Heart left ventricle (tissue), 16 donors: ENCODE measurements at regions of chr16 and their contacts with region 1.

Region 1: DNA sequence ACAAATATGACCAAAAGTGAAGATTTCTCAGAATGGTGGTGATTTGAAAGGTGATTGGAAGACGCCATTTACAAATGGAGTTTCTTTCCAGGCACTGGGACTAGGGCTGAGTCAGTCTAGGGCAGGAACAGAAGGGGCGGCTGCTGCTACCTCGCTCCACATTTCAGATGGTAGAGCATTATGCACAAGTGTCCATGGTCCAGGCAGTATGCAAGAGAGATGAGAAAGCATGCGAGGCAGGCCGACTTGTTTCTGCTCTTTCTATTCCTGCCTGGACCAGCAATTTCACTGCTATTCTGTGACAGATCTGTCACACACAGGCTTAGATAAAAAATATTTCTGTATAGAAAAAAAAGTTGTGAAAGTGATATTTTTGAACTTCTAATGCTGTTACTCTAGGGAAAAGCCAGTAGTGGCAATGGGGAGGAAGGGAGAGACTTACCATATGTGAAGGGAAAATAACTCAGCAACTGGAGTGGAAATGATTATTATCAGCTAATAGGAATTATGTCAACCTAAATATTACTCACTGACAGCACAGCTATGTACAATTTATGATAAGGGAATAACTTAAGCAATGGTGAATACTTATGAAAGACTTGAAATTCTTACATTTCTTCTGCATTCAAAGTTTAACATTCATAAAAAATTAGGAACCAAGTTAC is 134.7 kb upstream of the NETO2 start:
- DNase-seq: no peak
- ATAC-seq: no peak
- H3K4me3 ChIP-seq: no peak overlapping the region
- H3K27ac ChIP-seq: no peak overlapping the region
- H3K4me1 ChIP-seq: no peaks in the 10 kb centered on the region
- H3K27me3 ChIP-seq: no peaks in the 10 kb centered on the region
- CTCF ChIP-seq: no peak
- POLR2A ChIP-seq: no peak

Region 2: DNA sequence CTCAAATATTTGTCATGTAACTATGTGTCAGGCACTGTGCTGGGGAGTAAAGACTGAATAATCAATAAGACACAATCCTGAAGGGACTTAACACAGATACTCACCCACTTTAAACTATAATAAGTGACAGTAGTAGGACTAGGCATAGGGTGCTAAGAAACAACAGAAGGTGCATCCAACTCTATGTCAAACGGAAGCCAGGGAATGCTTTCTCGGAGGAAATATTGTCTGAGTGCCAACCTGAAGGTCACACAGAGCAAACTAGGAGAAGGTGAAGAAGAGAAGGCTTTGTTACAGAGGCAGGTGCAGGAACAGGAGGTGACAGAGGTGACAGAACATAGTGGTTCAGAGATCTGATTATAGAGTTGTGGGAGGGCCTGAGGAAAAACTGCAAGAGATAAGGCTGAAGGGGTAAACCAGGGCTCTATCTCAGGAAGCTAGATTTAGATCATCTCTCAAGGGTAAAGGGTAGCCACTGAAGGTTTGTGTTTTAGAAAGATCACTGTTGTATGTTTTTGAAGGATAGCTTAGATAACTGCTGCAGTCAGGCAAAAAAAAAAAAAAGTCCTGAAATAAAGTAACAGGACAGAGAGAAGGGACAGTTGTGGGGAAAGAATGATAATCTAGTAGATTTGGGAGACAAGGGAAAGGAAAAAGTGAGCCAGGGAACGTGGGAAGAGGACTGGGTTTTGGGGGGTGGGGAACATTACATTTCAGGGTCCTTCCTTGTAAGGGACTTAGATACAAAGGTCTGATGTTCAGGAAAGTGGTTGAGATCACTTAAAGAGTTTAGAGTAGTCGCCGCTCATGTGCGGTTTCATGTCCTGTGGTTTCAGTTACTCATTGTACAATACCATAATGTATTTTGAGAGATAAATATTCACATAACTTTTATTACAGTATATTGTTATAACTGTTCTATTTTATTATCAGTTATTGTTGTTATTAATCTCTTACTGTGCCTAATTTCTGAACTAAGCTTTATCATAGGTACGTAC is 49.1 kb before region 1 on chr16:
- intact Hi-C with region 1: no loop called
- DNase-seq: no peak
- ATAC-seq: peak in 2 of 4 donors; percentile 34 to 43
- H3K4me3 ChIP-seq: no peak overlapping the region
- H3K27ac ChIP-seq: no peak overlapping the region
- H3K4me1 ChIP-seq: peaks cover 0 to 9% (median 0%) of the 10 kb centered on the region in 12 donors
- H3K27me3 ChIP-seq: no peaks in the 10 kb centered on the region
- CTCF ChIP-seq: no peak
- POLR2A ChIP-seq: no peak

Region 3: DNA sequence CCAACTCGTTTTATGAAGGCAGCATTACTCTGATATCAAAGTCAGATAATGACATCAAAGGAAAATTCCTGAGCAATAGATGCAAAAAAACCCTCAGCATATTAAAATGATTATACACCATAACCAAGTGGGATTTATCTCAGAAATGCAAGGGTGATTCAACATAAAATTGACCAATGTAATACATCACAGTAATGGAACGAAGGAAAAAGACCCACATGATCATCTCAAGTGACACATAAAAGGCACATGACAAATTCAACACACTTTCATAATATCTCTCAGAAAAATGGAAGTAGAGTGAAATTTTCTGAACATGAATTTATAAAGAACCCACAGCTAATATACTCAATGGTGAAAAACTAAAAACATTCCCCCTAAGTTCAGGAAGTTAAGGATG is 63.6 kb after region 1 on chr16:
- intact Hi-C with region 1: loop called in 1 of 10 experiments (anchors 10 kb)
- DNase-seq: no peak
- ATAC-seq: no peak
- H3K4me3 ChIP-seq: no peak overlapping the region
- H3K27ac ChIP-seq: no peak overlapping the region
- H3K4me1 ChIP-seq: no peaks in the 10 kb centered on the region
- H3K27me3 ChIP-seq: no peaks in the 10 kb centered on the region
- CTCF ChIP-seq: no peak
- POLR2A ChIP-seq: no peak